ENCODE measurements at regions of chr16 and their contacts with region 1.

Region 1: DNA sequence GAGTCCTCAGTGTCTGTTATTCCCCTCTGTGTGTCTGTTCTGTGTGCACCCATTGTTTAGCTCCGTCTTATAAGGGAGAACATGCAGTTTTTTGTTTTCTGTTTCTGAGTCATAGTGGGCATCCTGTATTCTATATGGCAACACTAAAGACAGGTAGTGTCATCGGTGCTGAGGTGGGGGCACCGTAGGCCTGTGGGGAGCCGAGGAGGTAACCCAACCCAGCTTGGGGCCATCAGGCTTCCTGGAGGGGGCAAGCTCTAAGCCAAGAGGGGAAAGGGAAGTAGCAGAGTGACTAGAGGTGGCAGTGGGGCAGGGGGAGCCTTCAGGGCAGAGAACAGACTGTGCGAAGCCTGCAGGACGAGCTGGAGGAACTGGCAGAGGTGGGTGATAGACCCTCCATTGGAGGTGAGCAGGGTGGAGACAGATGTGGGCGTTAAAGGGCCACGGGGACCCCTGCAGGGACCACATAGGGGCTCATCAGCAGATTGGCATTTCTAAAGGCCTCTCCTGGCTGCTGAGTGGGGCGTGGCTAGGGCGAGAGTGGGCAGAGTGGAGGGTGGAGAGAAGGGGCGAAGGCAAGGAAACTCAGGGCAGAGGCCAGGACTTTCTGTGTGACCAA is 36.5 kb downstream of the CPNE2 start:
- DNase-seq: no peak
- CTCF ChIP-seq: no peak

Region 2: DNA sequence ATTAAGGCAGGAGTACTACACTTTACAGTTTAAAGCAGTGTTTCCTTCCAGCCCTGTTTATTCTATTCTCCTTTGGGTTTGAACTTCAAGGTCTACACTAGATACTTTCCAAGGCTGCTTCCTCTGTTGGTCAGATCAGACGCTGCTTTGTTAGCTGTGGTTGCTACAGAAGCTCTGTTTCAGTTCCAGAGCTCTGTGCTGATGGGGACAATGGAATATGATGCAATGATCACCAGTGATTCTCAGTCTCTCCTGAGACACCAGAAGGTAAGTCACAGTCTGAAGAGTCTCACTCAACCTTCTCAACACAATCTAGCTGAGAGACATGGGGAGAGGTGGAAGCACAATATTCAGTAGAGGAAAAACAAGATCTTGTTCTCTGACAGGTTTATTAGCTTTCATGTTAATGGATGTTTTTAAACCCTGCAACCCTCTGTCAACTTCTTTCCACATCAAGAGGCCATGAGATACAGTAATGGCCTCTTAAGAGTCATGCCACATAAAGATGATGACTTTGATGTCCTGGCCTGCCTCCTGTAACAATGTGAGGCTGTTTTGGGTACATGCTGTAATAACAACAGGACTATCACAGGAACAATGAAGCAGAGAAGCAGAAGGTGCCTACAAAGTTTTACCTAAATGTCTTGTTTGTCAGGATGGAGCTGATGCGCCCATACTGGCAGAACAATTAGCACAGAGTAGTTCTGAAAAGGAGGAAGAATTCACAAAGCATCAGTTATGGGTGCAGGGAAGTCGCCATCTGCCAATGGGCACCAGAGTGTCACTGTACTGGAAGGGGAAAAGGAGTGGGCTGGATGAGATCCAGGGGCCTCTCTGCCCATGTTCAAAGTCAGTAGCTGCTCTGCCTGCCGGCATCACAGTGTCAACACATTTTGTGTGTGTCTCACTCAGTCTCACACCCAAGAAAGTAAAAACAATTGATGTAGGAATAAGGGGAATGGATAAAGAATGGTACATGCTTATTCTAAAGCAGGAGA is 23.5 kb after region 1 on chr16:
- CTCF ChIA-PET with region 1: interaction called, 10 read pairs
- POLR2A ChIA-PET with region 1: no interaction called
- DNase-seq: no peak
- CTCF ChIP-seq: no peak

Measured in GM10248 (cell line).